Motor neuron (in vitro differentiated cells): ENCODE measurements at regions of chr14 and their contacts with region 1.

Region 1: DNA sequence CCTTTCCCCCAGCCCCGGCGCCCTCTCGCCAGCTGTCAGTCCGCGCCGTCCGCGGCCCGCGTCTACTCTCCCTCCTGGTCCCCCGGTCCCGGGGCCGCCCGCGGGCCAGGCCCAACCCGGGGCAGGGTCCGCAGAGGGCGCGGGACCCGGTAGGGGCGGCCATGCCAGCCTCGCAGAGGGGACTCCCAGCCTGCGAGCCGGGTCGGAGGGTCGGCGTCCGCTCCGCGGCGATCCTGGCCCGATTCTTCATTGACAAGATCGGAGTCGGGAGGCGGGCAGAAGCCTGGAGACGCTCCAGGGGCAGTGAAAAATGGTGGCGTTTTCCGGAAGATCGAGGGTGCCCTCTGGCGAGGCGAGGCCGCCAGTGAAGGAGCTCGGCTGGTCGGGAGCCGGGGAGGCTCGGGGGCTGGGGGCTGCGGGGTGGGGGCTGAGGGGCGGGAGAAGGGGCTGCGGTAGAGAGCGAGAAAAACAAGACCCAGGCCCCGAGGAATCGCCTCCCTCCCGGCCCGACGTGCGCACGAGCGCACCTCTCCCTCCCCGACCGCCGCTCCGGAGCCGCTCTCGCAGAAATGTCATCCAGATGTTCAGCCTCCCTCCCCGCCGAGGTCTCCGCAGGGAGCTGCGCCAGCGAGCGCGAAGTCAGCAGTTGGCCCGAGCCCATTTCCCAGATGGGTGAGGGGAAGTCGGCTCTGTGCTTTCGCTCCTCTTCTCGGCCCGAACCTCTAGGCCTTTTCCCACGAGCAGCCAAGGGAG is 647 bp upstream of the TGFB3 start:
- ATAC-seq: peak; percentile 25 to 83 (median 76)
- H3K4me3 ChIP-seq: peak overlapping the region; percentile 61 to 94 (median 63)
- H3K27ac ChIP-seq: peak overlapping the region in 1 of 2 donors; percentile 24
- H3K4me1 ChIP-seq: peaks cover 7 to 11% of the 10 kb centered on the region in 2 donors

Region 2: DNA sequence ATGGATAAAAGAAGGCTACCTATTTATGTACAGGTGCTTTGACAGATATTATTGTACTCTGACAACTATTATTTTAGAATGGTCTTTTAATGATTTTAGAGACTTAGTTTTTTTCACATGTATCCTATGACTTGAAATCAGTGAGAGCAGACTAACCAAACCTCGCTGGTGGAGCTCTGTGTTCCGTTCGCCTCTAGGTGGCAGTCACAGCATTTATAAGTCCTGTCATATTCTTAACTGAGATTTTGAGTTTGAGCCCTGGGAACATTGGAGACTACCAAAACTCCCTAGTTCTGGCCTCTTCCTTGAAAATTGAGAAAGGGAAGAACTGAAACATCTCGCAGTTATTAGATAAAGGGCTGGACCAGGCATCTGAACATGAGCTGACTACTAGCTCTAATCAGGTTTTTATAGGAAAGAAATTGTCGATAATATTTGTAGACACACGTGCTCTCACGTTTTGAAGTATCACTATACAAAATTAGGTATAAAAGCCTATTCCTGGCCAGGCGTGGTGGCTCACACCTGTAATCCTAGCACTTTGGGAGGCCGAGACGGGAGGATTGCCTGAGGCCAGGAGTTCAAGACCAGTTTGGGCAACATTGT is 273.1 kb before region 1 on chr14:
- in situ Hi-C with region 1: loop called in 6 of 9 experiments (anchors 10 to 25 kb)
- ATAC-seq: peak; percentile 26 to 90 (median 56)
- H3K4me3 ChIP-seq: no peak overlapping the region
- H3K27ac ChIP-seq: no peak overlapping the region
- H3K4me1 ChIP-seq: peaks cover 0 to 5% of the 10 kb centered on the region in 2 donors

Region 3: DNA sequence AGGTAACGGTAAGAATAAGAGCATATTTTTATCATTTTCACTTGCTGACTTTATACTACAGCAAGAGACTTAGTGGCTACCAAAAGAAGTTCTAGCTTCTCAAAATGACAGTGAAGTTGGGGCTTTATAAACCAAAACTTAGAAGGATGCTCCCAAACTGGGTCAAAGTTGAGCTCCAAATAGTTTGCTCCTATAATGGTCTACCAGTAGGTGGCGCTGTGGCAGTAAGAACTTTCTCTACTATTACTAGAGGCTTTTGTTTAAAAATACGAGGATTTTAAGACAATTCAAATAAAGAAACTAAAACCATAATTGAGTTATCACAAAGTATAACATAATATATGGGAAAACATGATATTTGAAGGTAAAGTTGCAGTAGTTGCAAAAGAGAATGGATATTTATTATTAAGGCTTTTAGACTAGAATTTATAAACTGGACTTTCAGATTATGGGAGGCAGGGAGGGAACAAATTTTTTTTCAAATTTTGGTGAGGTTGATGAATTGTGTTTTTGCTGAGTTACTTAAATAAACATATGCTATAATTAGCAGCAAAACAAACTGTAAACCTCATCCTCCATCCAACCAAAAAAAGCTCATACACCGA is 75.7 kb before region 1 on chr14:
- in situ Hi-C with region 1: loop called in 2 of 9 experiments (anchors 10 kb)
- ATAC-seq: peak in 4 of 8 experiments; percentile 36 to 61 (median 54)
- H3K4me3 ChIP-seq: no peak overlapping the region
- H3K27ac ChIP-seq: no peak overlapping the region
- H3K4me1 ChIP-seq: peaks cover 4 to 5% of the 10 kb centered on the region in 2 donors

Region 4: GRCh38 chr14:75911883-75912282 is 70.6 kb before region 1 on chr14:
- in situ Hi-C with region 1: loop called in 2 of 9 experiments (anchors 10 kb)
- ATAC-seq: peak in 5 of 8 experiments; percentile 100
- H3K4me3 ChIP-seq: no peak overlapping the region
- H3K27ac ChIP-seq: peak overlapping the region; percentile 56 to 74
- H3K4me1 ChIP-seq: peaks cover 9 to 11% of the 10 kb centered on the region in 2 donors